Psoas muscle (tissue), 8 donors: ENCODE measurements at regions of chr2 and their contacts with region 1.

Region 1: GRCh38 chr2:28392297-28393113 is at the start of gene FOSL2:
- DNase-seq: peak; percentile 97 to 98
- ATAC-seq: peak; percentile 55 to 73 (median 66)
- H3K4me3 ChIP-seq: peak within 1 kb of the TSS; percentile 100
- H3K27ac ChIP-seq: peak within 1 kb of the TSS; percentile 100
- H3K4me1 ChIP-seq: peaks cover 11% of the 10 kb centered on the region
- H3K27me3 ChIP-seq: no peaks in the 10 kb centered on the region
- CTCF ChIP-seq: peak; percentile 1
- total RNA-seq, gene FOSL2: 52.2 to 278 (median 192) TPM

Region 2: DNA sequence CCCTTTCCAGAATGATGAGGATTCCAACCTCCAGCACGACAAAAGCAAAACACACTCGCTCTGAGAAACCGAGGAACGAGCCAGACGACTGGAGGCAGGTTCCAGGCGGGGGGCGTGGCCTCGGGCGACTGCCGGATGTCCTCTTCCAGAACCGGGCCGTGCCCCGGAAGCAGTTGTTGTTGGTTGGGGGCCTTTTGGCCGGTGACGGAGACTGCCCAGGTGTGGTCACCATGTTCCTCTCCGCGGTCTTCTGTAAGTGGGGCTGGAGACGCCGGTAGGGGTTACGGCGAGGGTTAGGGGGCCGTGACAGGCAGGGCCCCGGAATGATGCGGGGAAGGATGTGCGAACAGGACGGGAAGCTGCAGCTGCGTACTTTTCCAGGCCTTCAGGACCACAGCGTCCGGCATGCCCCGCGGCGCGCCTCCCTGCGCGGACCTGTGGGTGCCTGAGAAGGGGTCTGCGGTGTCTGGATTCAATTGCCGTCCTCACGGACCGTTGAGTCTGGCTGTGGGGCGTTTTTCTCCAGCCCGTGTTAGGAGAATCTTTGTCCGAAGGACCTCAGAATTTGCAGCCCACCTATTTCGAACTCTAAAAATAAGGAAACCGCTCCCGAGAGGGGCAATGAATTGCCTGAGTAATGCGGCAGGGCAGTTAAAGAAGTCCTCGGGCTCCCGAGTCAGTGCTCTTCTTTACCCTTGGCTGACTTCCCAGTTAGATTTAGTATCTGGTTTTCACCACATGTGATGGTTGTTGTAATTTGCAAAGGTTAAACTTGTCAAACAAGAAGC is 620.8 kb before region 1 on chr2 and contains the start of gene MRPL33:
- intact Hi-C with region 1: loop called (anchors 10 kb)
- DNase-seq: peak; percentile 97 to 98
- ATAC-seq: peak; percentile 96 to 99 (median 97)
- H3K4me3 ChIP-seq: peak within 1 kb of the TSS; percentile 93
- H3K27ac ChIP-seq: peak within 1 kb of the TSS; percentile 97
- H3K4me1 ChIP-seq: peaks cover 44% of the 10 kb centered on the region
- H3K27me3 ChIP-seq: no peaks in the 10 kb centered on the region
- CTCF ChIP-seq: no peak
- total RNA-seq, gene MRPL33: 200 to 269 (median 257) TPM

Region 3: DNA sequence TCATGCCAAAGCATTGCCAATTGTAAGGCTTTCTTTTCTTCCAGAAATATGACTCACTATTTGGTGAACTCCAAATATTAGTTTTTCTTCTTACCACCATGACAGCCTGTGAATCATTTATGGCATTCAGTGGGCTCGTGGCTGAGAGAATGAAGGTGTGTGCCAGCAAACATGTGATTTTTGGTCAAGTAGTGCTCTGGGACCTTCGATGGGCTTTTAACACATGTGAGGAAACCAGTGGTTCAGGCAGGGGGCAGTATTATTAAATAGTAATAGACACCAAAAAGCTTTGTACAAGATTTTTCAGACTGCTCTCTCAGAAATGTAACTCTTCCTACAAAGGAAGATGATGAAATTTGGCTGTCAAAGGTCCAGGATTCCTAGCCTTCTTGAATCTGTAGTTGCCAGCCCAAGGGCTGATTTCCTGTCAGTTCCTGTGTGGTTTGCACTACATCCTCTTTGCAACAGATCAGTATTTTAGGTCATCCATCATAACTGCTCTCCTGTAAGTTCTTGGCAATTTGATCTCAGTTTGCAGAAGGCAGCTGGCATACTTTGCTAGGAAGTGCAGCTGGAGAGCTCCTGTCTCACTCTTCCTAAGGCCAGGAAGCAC is 437.6 kb before region 1 on chr2:
- intact Hi-C with region 1: loop called in 1 of 2 experiments (anchors 2 kb)
- DNase-seq: peak; percentile 59 to 63
- ATAC-seq: peak; percentile 91 to 95 (median 94)
- H3K4me3 ChIP-seq: peak overlapping the region; percentile 31
- H3K27ac ChIP-seq: peak overlapping the region; percentile 69
- H3K4me1 ChIP-seq: peaks cover 50% of the 10 kb centered on the region
- H3K27me3 ChIP-seq: no peaks in the 10 kb centered on the region
- CTCF ChIP-seq: peak; percentile 35

Region 4: GRCh38 chr2:27977608-27978312 is 414.7 kb before region 1 on chr2:
- intact Hi-C with region 1: no loop called
- DNase-seq: peak; percentile 26 to 52
- ATAC-seq: peak; percentile 88 to 95 (median 94)
- H3K4me3 ChIP-seq: peak overlapping the region; percentile 4
- H3K27ac ChIP-seq: peak overlapping the region; percentile 77
- H3K4me1 ChIP-seq: peaks cover 10% of the 10 kb centered on the region
- H3K27me3 ChIP-seq: no peaks in the 10 kb centered on the region
- CTCF ChIP-seq: no peak

Region 5: GRCh38 chr2:28164280-28164801 is 228.2 kb before region 1 on chr2:
- intact Hi-C with region 1: loop called (anchors 10 kb)
- DNase-seq: peak; percentile 48 to 78
- ATAC-seq: peak; percentile 91 to 96 (median 92)
- H3K4me3 ChIP-seq: peak overlapping the region; percentile 2
- H3K27ac ChIP-seq: peak overlapping the region; percentile 84
- H3K4me1 ChIP-seq: peaks cover 40% of the 10 kb centered on the region
- H3K27me3 ChIP-seq: no peaks in the 10 kb centered on the region
- CTCF ChIP-seq: no peak

Region 6: GRCh38 chr2:28276076-28276618 is 116.4 kb before region 1 on chr2:
- intact Hi-C with region 1: loop called in 1 of 2 experiments (anchors 2 kb)
- DNase-seq: no peak
- ATAC-seq: peak; percentile 55 to 72 (median 56)
- H3K4me3 ChIP-seq: no peak overlapping the region
- H3K27ac ChIP-seq: peak overlapping the region; percentile 76
- H3K4me1 ChIP-seq: peaks cover 33% of the 10 kb centered on the region
- H3K27me3 ChIP-seq: no peaks in the 10 kb centered on the region
- CTCF ChIP-seq: no peak

Region 7: DNA sequence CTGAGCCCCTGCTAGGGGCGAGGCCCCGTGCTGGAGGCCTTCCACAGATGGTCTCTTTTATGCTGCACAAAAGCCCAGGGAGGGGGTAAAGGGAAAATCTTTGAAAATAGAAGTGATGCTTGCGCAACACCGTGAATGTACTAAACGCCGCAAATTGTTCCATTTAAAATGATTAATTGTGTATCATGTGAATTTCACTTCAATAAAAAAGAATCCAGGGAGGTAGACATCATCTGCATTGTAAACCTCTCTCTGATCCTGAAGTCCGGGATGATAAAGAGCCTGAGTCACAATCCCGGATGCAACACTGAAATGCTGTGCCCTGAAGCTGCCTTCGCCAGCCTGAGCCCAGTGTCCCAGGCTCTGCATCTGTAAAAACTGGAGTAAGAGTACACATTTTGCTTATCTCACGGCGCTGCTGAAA is 251.4 kb after region 1 on chr2:
- intact Hi-C with region 1: no loop called
- DNase-seq: no peak
- ATAC-seq: peak in 2 of 4 donors; percentile 38 to 39
- H3K4me3 ChIP-seq: no peak overlapping the region
- H3K27ac ChIP-seq: no peak overlapping the region
- H3K4me1 ChIP-seq: peaks cover 4% of the 10 kb centered on the region
- H3K27me3 ChIP-seq: no peaks in the 10 kb centered on the region
- CTCF ChIP-seq: no peak

Region 8: DNA sequence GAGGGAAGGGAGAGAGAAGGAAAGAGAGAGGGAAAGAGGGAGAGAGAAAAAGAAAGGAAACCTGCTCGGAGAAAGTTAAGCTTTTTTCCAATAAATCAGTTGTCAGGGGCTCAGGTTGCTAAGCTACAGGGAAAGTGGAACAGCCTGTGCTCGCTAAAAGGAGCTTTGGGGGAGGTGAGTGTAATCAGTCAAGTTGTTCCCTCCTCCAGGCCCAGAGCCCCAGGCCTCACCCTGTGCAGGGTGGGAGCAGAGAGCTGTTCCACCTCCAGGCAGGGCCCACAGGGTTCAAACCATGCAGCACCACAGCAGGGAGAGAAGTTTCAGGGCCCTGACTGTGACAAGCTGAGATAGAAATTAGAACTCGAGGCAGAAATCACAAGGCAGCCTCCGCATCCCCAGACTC is 302.7 kb after region 1 on chr2:
- intact Hi-C with region 1: no loop called
- DNase-seq: no peak
- ATAC-seq: no peak
- H3K4me3 ChIP-seq: no peak overlapping the region
- H3K27ac ChIP-seq: no peak overlapping the region
- H3K4me1 ChIP-seq: peaks cover 10% of the 10 kb centered on the region
- H3K27me3 ChIP-seq: no peaks in the 10 kb centered on the region
- CTCF ChIP-seq: no peak